Lower leg skin (tissue), 4 donors: ENCODE measurements at regions of chr13 and their contacts with region 1.

Region 1: DNA sequence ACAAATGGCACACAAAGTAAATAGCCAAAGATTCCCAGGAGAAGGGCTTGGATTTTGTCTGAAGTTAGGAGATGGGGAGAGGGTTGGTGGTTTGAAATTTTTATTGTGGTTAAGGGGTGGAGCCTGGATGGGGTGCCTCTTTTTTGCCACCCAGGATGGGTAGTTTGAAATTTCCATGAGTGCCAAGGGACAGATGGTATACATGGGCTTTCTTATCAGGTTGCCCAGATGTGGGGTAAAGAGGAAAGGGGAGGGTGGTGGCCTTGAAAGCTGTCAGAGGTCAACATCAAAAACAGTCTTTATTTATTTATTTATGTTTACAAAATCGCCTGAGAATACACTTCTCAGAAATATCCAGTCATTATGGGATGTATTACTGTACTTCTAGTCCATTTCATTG is 46.2 kb downstream of the LMO7 start:
- DNase-seq: no peak
- H3K4me3 ChIP-seq: no peak overlapping the region
- CTCF ChIP-seq: no peak
- POLR2A ChIP-seq: no peak

Region 2: DNA sequence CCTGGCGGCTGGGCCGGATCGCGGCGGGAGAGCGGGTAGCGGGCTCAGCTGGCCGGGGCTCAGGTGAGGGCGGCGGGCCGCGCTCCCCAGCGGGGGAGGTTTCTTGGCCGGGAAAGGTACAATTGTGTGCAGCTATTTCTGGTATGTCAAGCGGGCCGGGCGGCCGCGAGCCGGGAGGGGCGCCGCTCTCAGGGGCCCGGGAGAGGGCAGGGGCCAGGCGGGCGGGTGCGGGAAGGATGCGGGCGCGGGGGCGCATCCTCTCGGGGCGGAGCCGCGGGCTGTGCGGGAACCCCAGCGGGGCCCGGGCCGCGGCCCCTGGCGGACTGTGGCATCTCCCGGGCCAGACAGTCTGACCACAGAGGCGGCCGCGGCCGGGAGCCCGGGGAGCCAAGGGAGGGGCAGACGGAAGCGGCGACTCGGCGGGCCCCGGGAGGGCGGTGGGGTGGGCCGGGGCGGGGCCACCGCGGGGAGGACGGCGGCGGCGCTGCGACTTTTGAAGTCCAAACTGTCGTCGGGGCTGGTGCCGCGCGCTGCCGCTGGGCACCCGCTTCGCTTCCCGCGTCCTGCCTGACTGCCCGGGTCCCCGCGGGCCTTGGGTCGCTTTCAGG is 46.4 kb before region 1 on chr13 and contains the start of gene LMO7:
- intact Hi-C with region 1: loop called (anchors 2 kb)
- DNase-seq: peak; percentile 16 to 89
- H3K4me3 ChIP-seq: peak within 1 kb of the TSS; percentile 38
- CTCF ChIP-seq: no peak
- POLR2A ChIP-seq: no peak
- total RNA-seq, gene LMO7: 60.5 to 108 (median 75.6) TPM

Region 3: DNA sequence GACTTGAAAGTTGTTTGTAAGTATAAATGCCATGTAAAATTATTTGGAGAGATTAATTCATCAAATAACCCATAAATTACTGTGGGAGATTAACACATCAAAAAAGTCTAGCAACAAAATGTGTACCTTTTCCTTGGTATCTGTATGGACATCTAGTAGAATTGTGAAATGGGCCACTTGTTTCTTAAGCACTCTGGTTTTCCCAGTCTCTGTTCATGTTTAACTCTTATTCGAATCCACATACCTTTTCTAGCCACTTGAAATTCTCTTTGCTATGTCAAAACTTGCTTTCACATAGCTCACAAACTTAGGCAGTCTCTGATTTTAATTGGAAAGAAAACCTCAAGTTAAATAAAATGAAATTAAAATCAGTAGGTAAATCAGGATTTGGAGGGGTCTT is 424.4 kb after region 1 on chr13:
- intact Hi-C with region 1: no loop called
- DNase-seq: no peak
- H3K4me3 ChIP-seq: no peak overlapping the region
- CTCF ChIP-seq: no peak
- POLR2A ChIP-seq: no peak